Ovary (tissue), 10 donors: ENCODE measurements at regions of chr3 and their contacts with region 1.

Region 1: GRCh38 chr3:148962513-148962912 is 28.8 kb upstream of the GYG1 start:
- DNase-seq: peak in 2 of 5 donors; percentile 37 to 38
- H3K4me3 ChIP-seq: no peak overlapping the region
- H3K27ac ChIP-seq: no peak overlapping the region
- H3K4me1 ChIP-seq: peaks cover 4% of the 10 kb centered on the region
- H3K27me3 ChIP-seq: no peaks in the 10 kb centered on the region
- CTCF ChIP-seq: no peak
- EP300 ChIP-seq: no peak
- POLR2A ChIP-seq: no peak

Region 2: GRCh38 chr3:149466192-149466591 is 503.7 kb after region 1 on chr3:
- intact Hi-C with region 1: loop called in 1 of 4 experiments (anchors 10 kb)
- DNase-seq: peak in 1 of 5 donors; percentile 34
- H3K4me3 ChIP-seq: no peak overlapping the region
- H3K27ac ChIP-seq: no peak overlapping the region
- H3K4me1 ChIP-seq: peaks cover 4% of the 10 kb centered on the region
- H3K27me3 ChIP-seq: no peaks in the 10 kb centered on the region
- CTCF ChIP-seq: no peak
- EP300 ChIP-seq: no peak
- POLR2A ChIP-seq: no peak